Sigmoid colon (tissue), 7 donors: ENCODE measurements at regions of chr14 and their contacts with region 1.

Region 1: GRCh38 chr14:21367582-21368144 is 16.2 kb downstream of the SUPT16H start:
- DNase-seq: no peak
- H3K4me3 ChIP-seq: no peak overlapping the region
- H3K27ac ChIP-seq: no peak overlapping the region
- H3K4me1 ChIP-seq: no peaks in the 10 kb centered on the region
- H3K27me3 ChIP-seq: no peaks in the 10 kb centered on the region
- CTCF ChIP-seq: no peak
- EP300 ChIP-seq: no peak
- POLR2A ChIP-seq: no peak

Region 2: GRCh38 chr14:21383848-21384493 is 16.3 kb after region 1 on chr14 and contains the start of gene SUPT16H:
- intact Hi-C with region 1: no loop called
- DNase-seq: peak; percentile 98
- H3K4me3 ChIP-seq: peak within 1 kb of the TSS; percentile 61 to 88 (median 72)
- H3K27ac ChIP-seq: peak within 1 kb of the TSS; percentile 87 to 95 (median 90)
- H3K4me1 ChIP-seq: peaks cover 0 to 26% (median 16%) of the 10 kb centered on the region in 4 donors
- H3K27me3 ChIP-seq: no peaks in the 10 kb centered on the region
- CTCF ChIP-seq: no peak
- EP300 ChIP-seq: no peak
- POLR2A ChIP-seq: peak in 1 of 2 donors; percentile 54
- total RNA-seq, gene SUPT16H: 62.0 to 77.1 (median 69.1) TPM

Region 3: DNA sequence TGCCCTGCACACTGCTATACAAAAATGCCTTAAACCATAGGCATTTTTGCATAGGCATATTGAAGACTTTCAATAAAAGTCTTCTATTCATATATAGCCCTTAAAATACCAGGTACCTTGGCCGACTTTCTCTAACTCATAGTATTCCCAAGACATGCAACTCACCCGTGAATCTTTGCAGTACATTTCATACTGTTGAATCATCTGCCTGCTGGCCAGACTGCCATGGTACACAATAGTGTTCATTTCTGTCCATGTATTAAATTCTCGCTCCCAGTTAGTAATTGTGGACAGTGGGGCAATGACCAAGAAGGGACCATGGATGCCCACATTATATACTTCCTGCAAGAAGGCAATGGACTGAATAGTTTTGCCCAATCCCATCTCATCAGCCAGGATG is 40.5 kb after region 1 on chr14:
- intact Hi-C with region 1: loop called (anchors 5 kb)
- DNase-seq: no peak
- H3K4me3 ChIP-seq: no peak overlapping the region
- H3K27ac ChIP-seq: no peak overlapping the region
- H3K4me1 ChIP-seq: no peaks in the 10 kb centered on the region
- H3K27me3 ChIP-seq: no peaks in the 10 kb centered on the region
- CTCF ChIP-seq: no peak
- EP300 ChIP-seq: no peak
- POLR2A ChIP-seq: no peak

Region 4: DNA sequence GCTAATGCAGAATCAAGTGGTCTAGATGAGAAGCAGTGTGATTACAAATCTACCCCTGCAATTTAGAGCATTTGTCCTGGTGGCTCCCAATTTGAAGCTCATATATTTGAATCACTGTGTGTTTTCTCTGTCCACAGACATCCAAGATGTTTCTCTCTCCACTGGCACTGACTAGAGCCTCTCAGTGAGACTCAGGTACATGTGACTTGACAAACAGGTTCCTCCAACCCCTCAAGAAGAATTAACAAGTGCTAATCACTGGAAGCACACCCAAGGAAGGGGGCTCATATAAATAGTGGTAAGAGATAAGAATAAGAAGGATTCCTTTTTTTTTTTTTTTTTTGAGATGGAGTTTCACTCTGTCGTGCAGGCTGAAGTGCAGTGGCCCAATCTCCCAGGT is 246.6 kb after region 1 on chr14:
- intact Hi-C with region 1: no loop called
- DNase-seq: no peak
- H3K4me3 ChIP-seq: no peak overlapping the region
- H3K27ac ChIP-seq: no peak overlapping the region
- H3K4me1 ChIP-seq: no peaks in the 10 kb centered on the region
- H3K27me3 ChIP-seq: no peaks in the 10 kb centered on the region
- CTCF ChIP-seq: no peak
- EP300 ChIP-seq: no peak
- POLR2A ChIP-seq: no peak